ENCODE measurements at regions of chrX and their contacts with region 1.

Region 1: DNA sequence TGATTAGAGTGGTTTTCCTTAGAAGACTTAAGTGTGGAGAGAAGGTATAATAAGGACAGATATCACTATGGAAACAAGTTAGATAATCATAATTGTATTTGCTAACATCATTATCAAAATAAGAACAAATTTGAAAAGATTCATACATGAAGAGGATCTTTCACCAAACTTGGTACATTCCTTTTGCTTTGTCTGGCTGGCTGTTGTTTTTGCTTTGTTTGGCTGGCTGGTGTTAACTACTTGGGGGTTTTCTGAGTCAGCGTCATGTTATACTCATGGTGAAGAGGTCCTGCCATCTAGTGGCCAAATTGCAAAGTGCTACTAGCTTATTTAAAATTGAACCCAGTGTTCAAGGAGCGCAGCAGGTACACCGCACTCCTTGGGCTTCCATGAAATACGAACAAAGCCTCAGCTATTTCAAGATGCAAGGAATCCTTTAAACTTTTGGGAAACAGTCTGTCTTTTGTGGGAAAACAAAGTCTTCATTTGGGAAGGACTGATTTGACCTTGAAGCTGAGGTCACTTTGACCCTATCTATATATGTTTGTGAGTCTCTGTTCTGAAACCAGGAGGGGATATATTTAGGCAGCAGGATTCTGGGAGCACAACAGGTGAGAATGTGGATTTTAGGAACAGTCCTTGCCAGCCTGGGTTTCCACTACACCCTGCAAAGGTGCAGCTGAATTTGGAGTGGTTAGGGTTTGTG is 129.7 kb downstream of the PLS3 start:
- DNase-seq: no peak

Region 2: DNA sequence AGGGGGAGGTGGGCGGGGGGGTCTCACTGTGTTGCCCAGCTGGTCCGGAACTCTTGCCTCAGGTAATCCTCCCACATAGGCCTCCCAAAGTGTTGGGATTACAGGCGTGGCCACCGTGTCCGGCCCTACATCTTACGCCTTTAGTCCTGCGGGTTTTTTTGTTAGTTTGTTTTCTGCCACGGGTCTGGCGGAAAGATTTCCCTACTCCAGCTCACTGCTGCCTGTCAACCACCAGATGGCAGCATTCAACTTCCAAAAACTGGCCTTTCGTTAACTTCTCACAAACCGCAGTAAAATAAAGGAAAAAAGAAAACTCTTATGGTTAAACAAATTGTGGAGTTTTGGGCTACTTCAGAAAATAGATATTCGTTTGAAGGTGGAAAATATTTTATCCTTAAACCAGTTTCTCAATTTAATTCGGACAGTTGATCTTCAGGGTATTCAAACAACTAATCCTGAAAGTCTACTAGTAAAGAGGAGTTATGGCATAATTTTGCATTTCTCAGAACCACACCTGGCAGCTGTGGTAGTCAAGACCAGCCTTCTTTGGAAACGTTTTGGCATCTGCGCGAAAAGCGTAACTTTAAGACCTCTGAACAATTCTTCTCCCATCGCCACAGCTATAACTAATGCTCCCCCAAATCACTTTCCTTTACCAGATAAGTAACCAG is 360.0 kb before region 1 on chrX:
- intact Hi-C with region 1: loop called (anchors 5 kb)
- DNase-seq: no peak

Region 3: DNA sequence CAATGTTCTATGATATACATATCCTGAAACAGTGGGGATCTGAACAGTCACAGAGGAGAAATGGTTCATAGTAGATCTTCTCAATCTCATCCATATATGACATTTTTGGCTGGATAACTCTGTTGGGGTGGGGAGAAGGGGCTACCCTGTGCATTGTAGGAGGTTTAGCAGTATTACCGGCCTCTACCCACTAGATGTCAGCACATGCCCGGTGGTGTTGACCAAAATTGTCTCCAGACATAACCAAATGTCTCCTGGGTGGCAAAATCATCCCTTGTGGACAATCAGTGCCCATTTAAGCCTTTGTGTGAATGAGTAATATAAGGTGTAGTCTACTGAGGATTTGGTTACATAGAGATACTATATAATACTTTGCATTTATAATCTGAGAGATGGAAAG is 39.7 kb before region 1 on chrX:
- intact Hi-C with region 1: loop called (anchors 5 kb)
- DNase-seq: no peak